ENCODE measurements at regions of chr14 and their contacts with region 1.

Region 1: DNA sequence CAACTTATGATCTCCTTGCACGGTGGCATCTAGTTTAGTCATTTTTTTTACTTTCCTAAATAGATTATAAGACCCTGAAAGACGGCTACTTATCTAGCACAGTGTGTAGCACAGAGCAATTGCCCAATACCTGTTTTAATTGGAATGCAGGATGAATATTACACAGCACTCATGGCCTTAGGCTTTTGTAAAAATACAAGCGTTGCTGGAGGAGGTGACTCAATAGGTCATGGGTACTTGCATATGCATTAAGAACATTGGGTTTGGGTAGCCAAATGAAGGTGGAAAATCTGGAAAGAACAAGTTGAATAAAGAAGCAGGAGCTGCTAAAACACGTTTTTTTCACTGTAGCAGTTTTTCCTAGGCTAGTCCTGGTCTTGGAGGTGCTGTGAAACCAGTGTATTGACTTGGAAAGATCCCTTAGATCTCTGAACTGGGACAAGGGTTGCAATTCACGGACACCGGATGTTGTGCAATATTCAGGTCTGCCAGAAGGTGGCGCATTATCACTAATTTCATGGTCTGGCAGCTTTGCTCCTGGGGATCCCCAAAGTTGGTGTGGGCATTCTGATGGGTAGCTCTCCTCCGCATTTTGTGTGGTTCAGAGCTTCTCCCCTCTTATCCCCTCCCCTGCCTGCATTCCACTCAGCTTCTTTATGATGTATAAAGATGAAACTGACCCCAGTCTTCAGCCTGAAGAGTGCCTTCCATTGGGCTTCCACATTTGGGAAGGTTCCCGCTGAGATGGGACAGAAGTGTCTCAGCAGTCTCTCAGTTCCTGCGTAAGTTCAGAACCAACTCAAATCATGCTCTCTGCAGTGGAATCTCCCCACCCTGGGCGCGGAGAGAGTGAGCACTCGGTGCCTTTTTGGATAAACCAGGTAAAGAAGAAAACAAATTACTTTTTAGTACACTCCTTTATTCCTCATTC is 278.3 kb downstream of the NRXN3 start:
- DNase-seq: peak in 3 of 5 donors; percentile 16 to 22 (median 18)
- ATAC-seq: no peak
- H3K4me3 ChIP-seq: no peak overlapping the region
- H3K27ac ChIP-seq: no peak overlapping the region
- H3K4me1 ChIP-seq: peaks cover 0 to 7% (median 0%) of the 10 kb centered on the region in 12 donors
- H3K27me3 ChIP-seq: no peaks in the 10 kb centered on the region
- CTCF ChIP-seq: peak; percentile 36 to 65 (median 55)
- POLR2A ChIP-seq: no peak

Region 2: DNA sequence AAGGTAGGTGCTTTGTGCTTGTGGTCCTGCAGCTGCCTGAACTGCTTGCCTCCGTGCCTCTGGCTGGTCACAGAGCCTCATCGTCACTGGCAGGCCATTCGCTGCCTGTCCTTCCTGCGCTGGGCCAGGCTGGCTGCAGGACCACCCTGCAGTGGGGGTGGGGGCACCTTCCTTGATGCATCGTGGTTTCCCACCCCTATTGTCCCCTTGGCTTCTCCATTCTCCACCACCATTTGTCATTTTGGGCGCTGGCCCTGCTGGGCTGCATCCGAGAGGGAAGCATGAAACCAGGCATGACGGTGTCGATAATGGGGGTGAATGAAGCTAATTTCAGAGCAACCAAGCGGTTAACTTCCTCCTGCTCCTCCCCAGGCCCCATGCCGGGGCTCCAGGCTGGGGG is 150.6 kb before region 1 on chr14:
- intact Hi-C with region 1: no loop called
- DNase-seq: no peak
- ATAC-seq: no peak
- H3K4me3 ChIP-seq: no peak overlapping the region
- H3K27ac ChIP-seq: no peak overlapping the region
- H3K4me1 ChIP-seq: no peaks in the 10 kb centered on the region
- H3K27me3 ChIP-seq: peaks cover 0 to 20% (median 4%) of the 10 kb centered on the region in 9 donors
- CTCF ChIP-seq: no peak
- POLR2A ChIP-seq: no peak

Region 3: DNA sequence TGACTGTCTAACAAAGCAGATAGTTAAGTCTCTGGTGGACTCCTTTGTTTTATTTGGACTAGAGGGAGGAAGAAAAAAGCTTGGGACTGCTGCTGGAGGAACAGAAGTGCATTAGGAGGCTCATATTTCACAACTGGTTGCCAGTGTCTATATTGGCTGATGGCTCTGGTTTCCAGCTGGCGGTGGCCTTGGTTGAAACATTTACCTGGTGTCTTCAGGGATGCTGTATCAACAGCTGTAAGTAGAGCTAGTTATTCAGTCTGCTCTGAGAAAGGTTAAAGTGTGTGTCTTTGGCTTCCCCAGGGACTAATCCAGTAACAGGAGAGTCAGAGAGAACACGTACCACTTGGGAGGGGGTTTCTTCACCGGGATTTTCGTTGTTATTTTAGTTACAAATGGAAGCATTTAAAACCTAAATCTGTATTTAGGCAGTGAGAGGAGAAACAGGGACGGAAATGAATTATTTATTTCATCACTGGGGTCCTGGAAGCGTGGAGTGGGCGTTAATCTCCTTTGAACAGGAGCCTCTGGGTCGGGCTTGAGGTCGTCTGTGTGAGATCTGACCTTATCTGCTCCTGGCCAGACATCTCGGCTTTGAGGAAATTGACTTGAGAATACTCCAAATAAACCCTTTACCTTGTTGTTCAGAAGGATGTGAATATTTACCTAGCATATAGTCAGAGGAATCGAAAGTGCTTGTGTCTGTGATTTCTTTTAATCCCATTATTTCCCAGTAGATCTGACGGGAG is 128.4 kb before region 1 on chr14:
- intact Hi-C with region 1: no loop called
- DNase-seq: no peak
- ATAC-seq: no peak
- H3K4me3 ChIP-seq: no peak overlapping the region
- H3K27ac ChIP-seq: no peak overlapping the region
- H3K4me1 ChIP-seq: no peaks in the 10 kb centered on the region
- H3K27me3 ChIP-seq: peaks cover 0 to 40% (median 0%) of the 10 kb centered on the region in 9 donors
- CTCF ChIP-seq: no peak
- POLR2A ChIP-seq: no peak

Region 4: GRCh38 chr14:78566026-78566858 is 117.8 kb after region 1 on chr14:
- intact Hi-C with region 1: loop called (anchors 2 to 10 kb)
- DNase-seq: peak; percentile 57 to 75 (median 73)
- ATAC-seq: peak; percentile 90 to 97 (median 94)
- H3K4me3 ChIP-seq: peak overlapping the region in 10 of 12 donors; percentile 15 to 59 (median 33)
- H3K27ac ChIP-seq: peak overlapping the region in 1 of 12 donors; percentile 39
- H3K4me1 ChIP-seq: peaks cover 0 to 8% (median 0%) of the 10 kb centered on the region in 12 donors
- H3K27me3 ChIP-seq: peaks cover 0 to 2% (median 0%) of the 10 kb centered on the region in 9 donors
- CTCF ChIP-seq: peak; percentile 58 to 86 (median 74)
- POLR2A ChIP-seq: no peak

Measured in heart left ventricle (tissue), 16 donors.